ENCODE measurements at regions of chrX and their contacts with region 1.

Region 1: GRCh38 chrX:111435469-111435868 is 23.5 kb upstream of the DCX start:
- DNase-seq: no peak
- H3K4me3 ChIP-seq: no peak overlapping the region
- H3K27ac ChIP-seq: no peak overlapping the region
- H3K4me1 ChIP-seq: no peaks in the 10 kb centered on the region
- CTCF ChIP-seq: no peak

Region 2: DNA sequence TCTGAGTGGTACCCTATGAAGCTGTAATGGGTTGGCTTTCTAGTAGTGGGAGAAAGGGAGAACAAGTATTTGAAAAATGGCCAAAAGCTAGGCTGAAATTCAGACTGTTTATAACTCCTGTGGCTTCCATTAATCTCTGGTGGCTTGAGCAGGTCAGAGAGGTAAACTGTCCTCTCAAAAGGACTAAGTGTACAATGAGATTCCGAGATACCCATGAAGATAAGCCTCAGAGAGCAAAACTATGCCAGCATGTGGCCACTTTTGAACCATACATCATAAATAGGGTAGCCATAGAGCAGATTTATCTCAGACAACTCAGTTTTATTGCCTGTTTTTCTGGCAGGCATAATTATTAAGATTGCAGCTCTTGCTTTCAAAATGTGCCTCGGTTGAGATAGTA is 729.0 kb before region 1 on chrX:
- CTCF ChIA-PET with region 1: no interaction called
- POLR2A ChIA-PET with region 1: no interaction called
- intact Hi-C with region 1: no loop called
- DNase-seq: no peak
- H3K4me3 ChIP-seq: no peak overlapping the region
- H3K27ac ChIP-seq: no peak overlapping the region
- H3K4me1 ChIP-seq: no peaks in the 10 kb centered on the region
- CTCF ChIP-seq: no peak

Region 3: DNA sequence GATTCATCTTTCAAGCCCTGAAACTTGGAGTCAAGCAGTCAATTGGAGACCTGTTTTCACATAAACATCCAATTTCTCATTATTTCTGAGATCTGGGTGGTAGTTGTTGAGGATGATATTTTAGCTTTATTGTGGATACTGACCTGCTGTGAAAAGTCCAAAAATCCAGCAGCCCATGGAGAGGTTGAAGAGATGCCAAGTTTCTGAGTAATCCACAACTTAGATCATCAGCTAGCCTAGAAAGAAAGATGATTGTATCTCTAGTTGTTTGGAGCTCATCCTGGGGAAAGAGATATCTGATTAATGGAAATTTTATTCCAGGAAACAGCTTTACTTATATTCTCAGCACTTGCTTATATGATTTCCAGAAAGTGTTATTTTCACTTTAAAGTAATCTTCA is 25.1 kb after region 1 on chrX:
- CTCF ChIA-PET with region 1: no interaction called
- POLR2A ChIA-PET with region 1: interaction called, 12 read pairs
- intact Hi-C with region 1: no loop called
- DNase-seq: no peak
- H3K4me3 ChIP-seq: no peak overlapping the region
- H3K27ac ChIP-seq: no peak overlapping the region
- H3K4me1 ChIP-seq: no peaks in the 10 kb centered on the region
- CTCF ChIP-seq: no peak

Region 4: DNA sequence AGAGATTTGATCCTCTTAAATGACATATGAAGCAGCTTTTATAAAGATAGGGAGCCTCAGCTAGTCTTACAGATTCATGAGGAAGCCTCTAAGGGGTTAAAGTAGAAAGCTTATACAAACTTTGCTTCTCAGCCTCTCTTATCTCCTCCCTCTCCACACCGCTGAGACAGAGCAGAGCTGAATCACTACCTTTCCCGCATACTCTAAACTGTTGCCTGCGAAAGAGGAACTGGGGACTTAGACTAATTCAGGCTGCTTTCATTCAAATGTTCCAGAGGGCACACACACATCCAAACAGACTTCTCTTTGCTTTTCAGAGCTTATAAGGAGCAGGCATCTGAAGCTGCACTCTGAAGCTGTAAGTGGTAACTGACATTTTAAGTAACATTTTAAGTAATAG is 76.0 kb after region 1 on chrX and contains the start of gene SERTM2:
- CTCF ChIA-PET with region 1: no interaction called
- POLR2A ChIA-PET with region 1: no interaction called
- intact Hi-C with region 1: no loop called
- DNase-seq: no peak
- H3K4me3 ChIP-seq: no peak within 1 kb of the TSS
- H3K27ac ChIP-seq: no peak within 1 kb of the TSS
- H3K4me1 ChIP-seq: no peaks in the 10 kb centered on the region
- CTCF ChIP-seq: no peak
- total RNA-seq, gene SERTM2: not detected in 2 replicates

Region 5: DNA sequence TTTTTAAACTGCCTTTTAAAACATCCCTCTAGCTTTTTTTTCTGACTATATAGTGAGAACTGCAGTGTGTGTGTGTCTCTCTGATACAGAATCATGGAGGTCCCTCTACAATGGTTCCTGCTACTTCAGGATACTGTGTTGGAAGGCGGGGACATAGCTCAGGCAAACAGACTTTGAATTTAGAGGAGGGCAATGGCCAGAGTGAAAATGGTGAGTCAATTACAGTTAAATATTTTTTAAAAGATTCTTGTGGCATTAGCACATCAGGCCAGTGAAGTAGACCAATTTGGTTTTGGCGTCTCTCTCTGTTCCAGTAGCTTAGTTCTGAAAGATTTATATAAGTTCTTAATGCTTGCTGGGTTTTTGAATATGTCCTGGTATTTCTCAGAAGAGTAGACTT is 292.6 kb after region 1 on chrX:
- CTCF ChIA-PET with region 1: no interaction called
- POLR2A ChIA-PET with region 1: no interaction called
- intact Hi-C with region 1: no loop called
- DNase-seq: no peak
- H3K4me3 ChIP-seq: no peak overlapping the region
- H3K27ac ChIP-seq: no peak overlapping the region
- H3K4me1 ChIP-seq: no peaks in the 10 kb centered on the region
- CTCF ChIP-seq: no peak

Region 6: DNA sequence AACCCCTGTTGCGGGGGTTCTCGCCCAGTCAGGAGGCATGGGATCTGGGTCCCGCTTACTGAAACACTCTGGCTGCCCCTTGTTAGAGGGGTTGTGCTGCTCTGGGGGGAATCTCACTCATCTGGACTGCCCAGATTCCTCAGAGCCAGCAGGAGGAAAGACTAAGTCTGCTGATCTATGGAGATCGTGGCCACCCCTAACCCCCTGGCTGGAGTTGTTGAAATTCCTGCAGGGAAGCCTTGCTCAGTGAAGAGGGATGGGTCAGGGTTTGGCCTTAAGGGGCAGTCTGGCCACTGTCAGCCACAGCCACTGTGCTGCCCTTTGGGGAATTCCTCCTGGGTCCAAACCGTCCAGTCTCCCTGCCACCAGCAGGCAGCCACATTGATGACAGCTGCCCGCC is 1767.1 kb after region 1 on chrX:
- CTCF ChIA-PET with region 1: no interaction called
- POLR2A ChIA-PET with region 1: no interaction called
- intact Hi-C with region 1: no loop called
- DNase-seq: no peak
- H3K4me3 ChIP-seq: no peak overlapping the region
- H3K27ac ChIP-seq: no peak overlapping the region
- H3K4me1 ChIP-seq: no peaks in the 10 kb centered on the region
- CTCF ChIP-seq: no peak